Heart right ventricle (tissue), 16 donors: ENCODE measurements at regions of chr7 and their contacts with region 1.

Region 1: GRCh38 chr7:26200444-26201246 is at the start of gene HNRNPA2B1:
- DNase-seq: peak; percentile 95 to 97
- ATAC-seq: peak; percentile 82 to 93 (median 87)
- H3K4me3 ChIP-seq: peak within 1 kb of the TSS; percentile 65 to 99 (median 88)
- H3K27ac ChIP-seq: peak within 1 kb of the TSS; percentile 93 to 100 (median 99)
- H3K4me1 ChIP-seq: peaks cover 6 to 56% (median 51%) of the 10 kb centered on the region in 9 donors
- H3K27me3 ChIP-seq: no peaks in the 10 kb centered on the region
- CTCF ChIP-seq: peak in 1 of 9 donors; percentile 19
- total RNA-seq, gene HNRNPA2B1: 364 to 445 (median 398) TPM

Region 2: GRCh38 chr7:25739143-25739542 is 461.5 kb before region 1 on chr7:
- intact Hi-C with region 1: no loop called
- DNase-seq: no peak
- ATAC-seq: no peak
- H3K4me3 ChIP-seq: no peak overlapping the region
- H3K27ac ChIP-seq: no peak overlapping the region
- H3K4me1 ChIP-seq: no peaks in the 10 kb centered on the region
- H3K27me3 ChIP-seq: no peaks in the 10 kb centered on the region
- CTCF ChIP-seq: no peak

Region 3: GRCh38 chr7:26061688-26062150 is 138.9 kb before region 1 on chr7:
- intact Hi-C with region 1: no loop called
- DNase-seq: peak; percentile 23 to 55
- ATAC-seq: peak in 5 of 8 donors; percentile 33 to 74 (median 49)
- H3K4me3 ChIP-seq: no peak overlapping the region
- H3K27ac ChIP-seq: no peak overlapping the region
- H3K4me1 ChIP-seq: peaks cover 0 to 10% (median 0%) of the 10 kb centered on the region in 9 donors
- H3K27me3 ChIP-seq: peaks cover 0 to 88% (median 57%) of the 10 kb centered on the region in 7 donors
- CTCF ChIP-seq: peak; percentile 54 to 85 (median 74)

Region 4: DNA sequence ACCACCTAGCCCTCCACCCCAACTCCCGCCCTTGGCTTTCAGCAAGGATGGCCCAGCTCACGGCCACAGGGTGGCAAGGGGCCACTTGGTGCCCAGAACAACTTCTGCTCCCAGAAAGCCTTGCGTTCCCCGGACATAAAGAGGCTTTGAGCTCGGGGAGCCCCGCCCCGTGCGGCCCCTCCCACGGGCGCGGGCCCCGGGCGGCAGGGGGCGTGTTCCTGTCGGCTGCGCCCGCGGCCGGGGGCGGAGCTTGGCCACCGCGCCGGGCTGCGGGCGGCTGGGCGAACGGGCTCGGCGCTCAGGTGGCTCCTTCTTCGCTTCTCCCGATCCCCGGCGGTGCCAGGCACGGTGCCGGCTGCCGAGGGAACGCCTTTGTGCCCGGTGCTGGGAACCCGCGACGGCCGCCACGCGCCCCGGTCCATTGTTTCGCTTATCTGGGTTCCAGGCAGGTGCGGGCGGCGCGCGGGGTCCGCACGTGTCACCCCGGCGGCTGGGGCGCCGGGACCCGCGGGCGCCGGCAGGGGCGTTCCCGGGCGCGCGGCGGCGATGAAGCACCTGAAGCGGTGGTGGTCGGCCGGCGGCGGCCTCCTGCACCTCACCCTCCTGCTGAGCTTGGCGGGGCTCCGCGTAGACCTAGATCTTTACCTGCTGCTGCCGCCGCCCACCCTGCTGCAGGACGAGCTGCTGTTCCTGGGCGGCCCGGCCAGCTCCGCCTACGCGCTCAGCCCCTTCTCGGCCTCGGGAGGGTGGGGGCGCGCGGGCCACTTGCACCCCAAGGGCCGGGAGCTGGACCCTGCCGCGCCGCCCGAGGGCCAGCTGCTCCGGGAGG is 48.5 kb before region 1 on chr7 and contains the start of gene NFE2L3:
- intact Hi-C with region 1: loop called in 2 of 10 experiments (anchors 5 kb)
- DNase-seq: peak; percentile 36 to 75
- ATAC-seq: peak; percentile 74 to 93 (median 82)
- H3K4me3 ChIP-seq: peak within 1 kb of the TSS; percentile 19 to 69 (median 56)
- H3K27ac ChIP-seq: peak within 1 kb of the TSS in 1 of 10 donors; percentile 66
- H3K4me1 ChIP-seq: peaks cover 0 to 52% (median 13%) of the 10 kb centered on the region in 9 donors
- H3K27me3 ChIP-seq: peaks cover 7 to 58% (median 37%) of the 10 kb centered on the region in 7 donors
- CTCF ChIP-seq: peak in 6 of 9 donors; percentile 21 to 36 (median 24)
- total RNA-seq, gene NFE2L3: 0.32 to 4.1 (median 1.1) TPM

Region 5: GRCh38 chr7:26187380-26188205 is 13.1 kb before region 1 on chr7:
- intact Hi-C with region 1: loop called in 1 of 10 experiments (anchors 2 kb)
- DNase-seq: no peak
- ATAC-seq: peak in 1 of 8 donors; percentile 24
- H3K4me3 ChIP-seq: no peak overlapping the region
- H3K27ac ChIP-seq: no peak overlapping the region
- H3K4me1 ChIP-seq: peaks cover 3 to 76% (median 34%) of the 10 kb centered on the region in 9 donors
- H3K27me3 ChIP-seq: no peaks in the 10 kb centered on the region
- CTCF ChIP-seq: no peak

Region 6: DNA sequence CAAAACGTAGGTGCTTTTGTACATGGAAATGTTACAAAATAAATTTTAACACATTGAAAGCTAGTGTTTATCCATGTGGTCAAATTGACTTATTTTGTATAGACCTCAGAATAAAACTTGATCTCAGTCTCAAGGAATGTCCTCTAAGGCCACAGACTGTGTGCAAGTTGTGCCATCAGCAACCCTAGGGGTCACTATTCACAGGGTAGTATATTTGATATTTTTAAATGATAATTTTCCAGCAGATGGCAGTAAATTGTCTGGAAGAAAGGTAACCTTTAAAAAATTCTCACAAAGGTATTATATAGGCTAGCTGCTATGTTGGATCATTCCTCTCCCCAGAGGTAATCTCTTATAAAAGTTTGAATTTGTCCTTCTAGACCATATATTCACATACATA is 78.1 kb after region 1 on chr7:
- intact Hi-C with region 1: loop called in 1 of 10 experiments (anchors 10 kb)
- DNase-seq: no peak
- ATAC-seq: no peak
- H3K4me3 ChIP-seq: no peak overlapping the region
- H3K27ac ChIP-seq: no peak overlapping the region
- H3K4me1 ChIP-seq: peaks cover 0 to 10% (median 0%) of the 10 kb centered on the region in 9 donors
- H3K27me3 ChIP-seq: no peaks in the 10 kb centered on the region
- CTCF ChIP-seq: peak in 3 of 9 donors; percentile 20 to 48 (median 37)

Region 7: DNA sequence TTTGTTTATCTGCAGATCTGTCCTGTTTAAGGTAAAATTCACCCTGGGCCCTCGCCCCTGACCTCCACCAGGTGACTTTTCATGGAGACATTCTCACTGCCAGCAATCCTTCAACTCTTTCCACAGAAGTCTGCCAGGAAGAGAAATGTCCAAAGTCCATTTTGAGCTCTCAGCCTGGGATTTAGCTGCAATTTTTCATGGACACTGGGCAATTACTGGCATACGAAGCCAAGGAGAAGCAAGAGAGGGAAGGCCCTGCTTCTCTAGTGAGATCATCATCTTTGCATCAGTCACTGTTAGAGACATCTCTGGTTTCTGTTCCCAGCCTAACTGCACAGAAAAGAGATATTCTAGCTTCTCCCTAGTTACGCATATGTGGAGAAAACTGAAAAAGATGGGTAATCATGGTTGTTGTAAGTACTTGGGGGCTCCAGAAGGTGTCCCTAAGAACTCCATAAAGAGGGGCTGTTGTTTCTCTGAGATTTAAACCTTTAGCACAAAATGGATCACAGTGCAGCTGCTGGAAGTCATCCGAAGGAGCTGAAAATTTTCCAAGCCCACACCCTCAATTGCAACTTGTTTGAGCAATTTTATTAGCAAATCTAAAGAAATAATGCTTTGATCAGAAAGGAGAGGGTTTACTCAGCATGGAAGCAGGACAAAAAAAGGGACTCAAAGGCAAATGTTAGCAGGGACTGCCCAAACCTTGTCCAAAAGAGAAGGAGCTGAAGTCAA is 259.9 kb after region 1 on chr7:
- intact Hi-C with region 1: no loop called
- DNase-seq: no peak
- ATAC-seq: no peak
- H3K4me3 ChIP-seq: no peak overlapping the region
- H3K27ac ChIP-seq: no peak overlapping the region
- H3K4me1 ChIP-seq: no peaks in the 10 kb centered on the region
- H3K27me3 ChIP-seq: peaks cover 0 to 4% (median 0%) of the 10 kb centered on the region in 7 donors
- CTCF ChIP-seq: no peak